CD8-positive, alpha-beta T cell (primary cell): ENCODE measurements at regions of chr9 and their contacts with region 1.

Region 1: DNA sequence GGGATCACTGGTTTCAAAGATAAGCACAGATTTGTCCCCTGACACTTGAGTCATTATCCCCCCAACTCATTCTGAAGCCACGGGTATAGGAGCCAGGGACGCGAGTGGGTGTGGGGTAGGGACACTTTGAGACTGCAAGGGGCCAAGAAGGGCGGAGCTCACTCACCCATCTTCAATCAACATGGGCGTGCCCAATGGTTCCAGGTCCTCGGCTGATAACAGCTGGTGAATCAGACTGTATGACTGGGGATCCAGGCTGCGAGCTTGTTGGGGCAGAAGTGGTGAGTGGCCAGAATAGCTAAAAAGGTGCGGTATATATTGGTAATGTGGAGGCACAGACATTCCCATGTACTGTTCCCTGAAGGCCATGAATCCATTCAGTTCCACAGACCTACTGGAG is 30.7 kb upstream of the NR5A1 start:
- DNase-seq: no peak
- ATAC-seq: no peak
- H3K4me3 ChIP-seq: no peak overlapping the region
- H3K4me3 Mint-ChIP-seq: no peak overlapping the region
- H3K27ac ChIP-seq: no peak overlapping the region
- H3K27ac Mint-ChIP-seq: no peak overlapping the region
- H3K4me1 ChIP-seq: no peaks in the 10 kb centered on the region
- H3K4me1 Mint-ChIP-seq: no peaks in the 10 kb centered on the region
- H3K27me3 ChIP-seq: no peaks in the 10 kb centered on the region
- H3K27me3 Mint-ChIP-seq: peaks cover 3% of the 10 kb centered on the region
- CTCF ChIP-seq: no peak

Region 2: DNA sequence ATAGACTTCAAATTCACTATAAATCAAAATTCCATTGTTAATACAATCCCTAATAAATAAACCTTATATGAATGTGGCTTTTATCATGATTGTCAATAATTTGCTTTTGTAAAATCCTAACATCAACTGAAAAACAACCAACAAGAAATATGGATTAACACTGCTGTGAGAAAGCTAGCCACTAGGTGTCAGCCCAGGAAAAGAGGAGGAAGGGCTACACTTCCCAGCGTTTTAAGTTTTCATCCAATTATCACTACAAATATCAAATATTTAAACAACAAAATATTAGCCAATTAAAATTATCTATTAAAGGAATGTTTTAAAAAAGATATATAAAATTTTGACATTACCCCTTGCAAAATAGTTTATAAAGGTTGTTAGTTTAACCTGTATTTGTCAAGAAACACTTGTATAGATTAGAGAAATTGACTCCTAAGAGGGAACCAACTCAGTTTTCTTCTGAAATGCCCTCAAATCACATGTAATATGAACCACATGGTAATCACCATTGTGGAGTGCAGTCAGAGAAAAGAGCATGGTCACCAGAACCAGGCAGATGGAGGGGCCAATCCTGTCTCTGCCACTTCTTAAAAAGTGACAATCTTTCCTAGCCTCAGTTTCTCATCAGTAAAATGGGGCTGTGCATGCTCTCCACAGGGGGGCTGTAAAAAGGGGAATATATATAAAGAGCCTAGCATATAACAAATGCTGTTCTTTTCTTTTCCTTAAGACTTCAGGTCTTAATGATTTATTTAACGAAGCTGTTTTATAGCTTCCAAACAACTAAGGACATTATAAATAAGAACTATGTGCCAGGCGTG is 993.7 kb before region 1 on chr9:
- CTCF ChIA-PET with region 1: interaction called, 4 read pairs
- POLR2A ChIA-PET with region 1: no interaction called
- intact Hi-C with region 1: loop called (anchors 2 to 5 kb)
- DNase-seq: peak in 2 of 9 experiments; percentile 29 to 45
- ATAC-seq: no peak
- H3K4me3 ChIP-seq: no peak overlapping the region
- H3K4me3 Mint-ChIP-seq: no peak overlapping the region
- H3K27ac ChIP-seq: no peak overlapping the region
- H3K27ac Mint-ChIP-seq: no peak overlapping the region
- H3K4me1 ChIP-seq: no peaks in the 10 kb centered on the region
- H3K4me1 Mint-ChIP-seq: no peaks in the 10 kb centered on the region
- H3K27me3 ChIP-seq: no peaks in the 10 kb centered on the region
- H3K27me3 Mint-ChIP-seq: no peaks in the 10 kb centered on the region
- CTCF ChIP-seq: peak; percentile 77

Region 3: DNA sequence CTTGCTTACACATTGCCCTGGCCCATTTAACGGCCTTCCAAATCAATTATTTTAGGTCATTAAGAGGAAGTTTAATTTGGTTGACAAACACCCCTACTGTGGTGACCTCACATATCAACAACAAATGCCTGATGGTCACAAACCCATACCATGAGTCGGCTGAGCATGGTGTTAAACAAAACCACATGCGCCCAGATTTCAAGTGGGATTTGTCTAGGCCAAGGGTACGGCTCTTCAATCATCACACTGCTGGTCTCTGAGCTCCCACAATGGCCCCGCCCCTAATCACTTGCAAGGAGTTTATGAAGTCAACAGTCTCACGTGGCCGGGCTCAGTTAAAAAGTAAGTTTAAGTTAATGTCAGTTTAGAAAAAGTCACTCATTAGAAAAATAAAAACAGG is 938.1 kb before region 1 on chr9:
- CTCF ChIA-PET with region 1: no interaction called
- POLR2A ChIA-PET with region 1: no interaction called
- intact Hi-C with region 1: no loop called
- DNase-seq: no peak
- ATAC-seq: no peak
- H3K4me3 ChIP-seq: no peak overlapping the region
- H3K4me3 Mint-ChIP-seq: no peak overlapping the region
- H3K27ac ChIP-seq: no peak overlapping the region
- H3K27ac Mint-ChIP-seq: no peak overlapping the region
- H3K4me1 ChIP-seq: no peaks in the 10 kb centered on the region
- H3K4me1 Mint-ChIP-seq: no peaks in the 10 kb centered on the region
- H3K27me3 ChIP-seq: no peaks in the 10 kb centered on the region
- H3K27me3 Mint-ChIP-seq: no peaks in the 10 kb centered on the region
- CTCF ChIP-seq: no peak

Region 4: GRCh38 chr9:124420991-124421543 is 116.9 kb before region 1 on chr9:
- CTCF ChIA-PET with region 1: interaction called, 17 read pairs
- POLR2A ChIA-PET with region 1: no interaction called
- intact Hi-C with region 1: loop called in 1 of 2 experiments (anchors 1 kb)
- DNase-seq: peak in 2 of 9 experiments; percentile 25 to 40
- ATAC-seq: no peak
- H3K4me3 ChIP-seq: no peak overlapping the region
- H3K4me3 Mint-ChIP-seq: no peak overlapping the region
- H3K27ac ChIP-seq: no peak overlapping the region
- H3K27ac Mint-ChIP-seq: no peak overlapping the region
- H3K4me1 ChIP-seq: no peaks in the 10 kb centered on the region
- H3K4me1 Mint-ChIP-seq: peaks cover 6% of the 10 kb centered on the region
- H3K27me3 ChIP-seq: no peaks in the 10 kb centered on the region
- H3K27me3 Mint-ChIP-seq: no peaks in the 10 kb centered on the region
- CTCF ChIP-seq: no peak

Region 5: GRCh38 chr9:124527781-124528180 is 10.1 kb before region 1 on chr9:
- CTCF ChIA-PET with region 1: interaction called, 14 read pairs
- POLR2A ChIA-PET with region 1: no interaction called
- intact Hi-C with region 1: no loop called
- DNase-seq: no peak
- ATAC-seq: no peak
- H3K4me3 ChIP-seq: no peak overlapping the region
- H3K4me3 Mint-ChIP-seq: no peak overlapping the region
- H3K27ac ChIP-seq: no peak overlapping the region
- H3K27ac Mint-ChIP-seq: no peak overlapping the region
- H3K4me1 ChIP-seq: no peaks in the 10 kb centered on the region
- H3K4me1 Mint-ChIP-seq: no peaks in the 10 kb centered on the region
- H3K27me3 ChIP-seq: no peaks in the 10 kb centered on the region
- H3K27me3 Mint-ChIP-seq: no peaks in the 10 kb centered on the region
- CTCF ChIP-seq: no peak

Region 6: DNA sequence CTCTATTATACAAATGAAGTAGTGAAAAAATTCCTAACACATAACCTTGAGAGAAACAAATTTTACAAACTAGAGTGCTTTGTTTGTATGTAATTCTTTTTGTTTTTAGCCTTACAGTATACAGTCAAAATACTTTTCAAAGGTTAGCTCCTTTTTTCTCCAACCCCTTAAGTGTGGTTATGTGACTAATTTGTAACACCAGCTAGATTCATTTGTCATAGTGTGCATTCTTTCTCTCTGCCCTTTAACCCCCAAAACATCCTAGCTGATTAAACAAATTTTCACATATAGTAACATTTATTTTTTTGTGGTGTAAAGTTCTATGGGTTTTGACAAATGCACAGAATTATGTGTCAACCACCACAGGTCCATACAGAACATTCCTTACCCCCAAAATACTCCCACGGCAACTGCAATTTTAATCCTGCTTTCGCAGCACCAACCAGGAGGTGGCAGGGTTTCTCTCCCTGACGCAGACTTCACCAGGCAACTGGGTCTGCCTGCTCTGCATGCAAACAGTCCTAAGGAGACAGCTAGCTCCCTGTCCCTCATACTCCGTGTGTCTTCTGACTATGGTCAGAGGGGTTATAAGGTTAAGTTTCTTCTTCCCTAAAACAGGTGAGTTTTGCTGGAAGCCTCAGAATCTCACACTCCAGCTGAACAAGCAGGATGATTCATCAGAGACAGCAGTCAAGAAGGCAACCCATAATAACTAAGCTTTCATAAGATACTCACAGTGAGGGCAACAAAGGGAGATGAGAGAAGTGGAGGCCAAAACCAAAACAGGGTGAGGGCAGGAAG is 13.7 kb after region 1 on chr9:
- CTCF ChIA-PET with region 1: interaction called, 14 read pairs
- POLR2A ChIA-PET with region 1: no interaction called
- intact Hi-C with region 1: no loop called
- DNase-seq: peak in 4 of 9 experiments; percentile 6 to 40 (median 17)
- ATAC-seq: peak; percentile 48
- H3K4me3 ChIP-seq: no peak overlapping the region
- H3K4me3 Mint-ChIP-seq: no peak overlapping the region
- H3K27ac ChIP-seq: no peak overlapping the region
- H3K27ac Mint-ChIP-seq: no peak overlapping the region
- H3K4me1 ChIP-seq: peaks cover 14% of the 10 kb centered on the region
- H3K4me1 Mint-ChIP-seq: peaks cover 10% of the 10 kb centered on the region
- H3K27me3 ChIP-seq: no peaks in the 10 kb centered on the region
- H3K27me3 Mint-ChIP-seq: peaks cover 3% of the 10 kb centered on the region
- CTCF ChIP-seq: peak; percentile 32